ENCODE measurements at regions of chr17 and their contacts with region 1.

Region 1: DNA sequence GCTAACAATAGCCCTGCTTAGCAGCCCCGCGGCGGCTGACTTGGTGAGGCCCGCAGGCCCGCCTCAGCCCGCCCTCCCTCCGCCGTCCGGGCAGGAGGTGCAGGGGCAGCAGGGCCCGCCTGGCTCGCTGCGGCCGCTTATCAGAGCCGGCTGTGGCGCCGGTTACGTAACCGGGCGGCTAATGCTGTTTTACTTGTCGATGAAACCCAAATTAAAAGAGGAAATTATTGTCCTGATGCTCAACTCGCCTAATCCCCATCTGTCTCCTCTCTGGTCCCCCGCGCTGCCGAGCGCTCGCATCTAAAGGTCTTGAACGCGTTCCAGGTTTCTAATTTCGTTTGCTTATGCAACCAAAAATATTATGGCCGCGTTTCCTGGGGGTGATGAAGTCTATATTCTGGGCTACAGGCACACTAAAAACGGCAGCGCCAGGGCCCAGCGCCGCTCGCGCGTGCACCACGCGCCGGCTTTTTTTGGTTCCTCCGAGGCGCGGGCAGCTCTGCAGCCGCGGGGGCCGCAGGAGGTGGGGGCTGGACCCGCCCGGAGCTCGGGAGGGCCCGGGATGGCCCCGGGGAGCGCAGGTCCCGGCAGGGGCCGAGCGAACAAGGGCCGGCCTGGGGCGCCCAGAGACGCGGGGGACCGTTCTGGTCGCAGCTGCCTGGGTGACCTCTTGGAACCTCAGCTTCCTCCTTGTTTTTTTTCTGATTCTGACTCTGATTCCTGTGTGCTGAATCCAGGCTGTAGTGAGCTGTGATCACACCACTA is 65.2 kb upstream of the TOB1 start:
- DNase-seq: peak; percentile 69 to 78 (median 72)
- ATAC-seq: peak; percentile 79
- H3K4me3 ChIP-seq: peak overlapping the region; percentile 28
- H3K27ac ChIP-seq: peak overlapping the region; percentile 48; the same call in 1 of the 3 replicates
- H3K4me1 ChIP-seq: peaks cover 40 to 48% of the 10 kb centered on the region in 2 experiments
- H3K27me3 ChIP-seq: no peaks in the 10 kb centered on the region
- CTCF ChIP-seq: no peak
- EP300 ChIP-seq: no peak
- POLR2A ChIP-seq: no peak
- RAD21 ChIP-seq: no peak

Region 2: DNA sequence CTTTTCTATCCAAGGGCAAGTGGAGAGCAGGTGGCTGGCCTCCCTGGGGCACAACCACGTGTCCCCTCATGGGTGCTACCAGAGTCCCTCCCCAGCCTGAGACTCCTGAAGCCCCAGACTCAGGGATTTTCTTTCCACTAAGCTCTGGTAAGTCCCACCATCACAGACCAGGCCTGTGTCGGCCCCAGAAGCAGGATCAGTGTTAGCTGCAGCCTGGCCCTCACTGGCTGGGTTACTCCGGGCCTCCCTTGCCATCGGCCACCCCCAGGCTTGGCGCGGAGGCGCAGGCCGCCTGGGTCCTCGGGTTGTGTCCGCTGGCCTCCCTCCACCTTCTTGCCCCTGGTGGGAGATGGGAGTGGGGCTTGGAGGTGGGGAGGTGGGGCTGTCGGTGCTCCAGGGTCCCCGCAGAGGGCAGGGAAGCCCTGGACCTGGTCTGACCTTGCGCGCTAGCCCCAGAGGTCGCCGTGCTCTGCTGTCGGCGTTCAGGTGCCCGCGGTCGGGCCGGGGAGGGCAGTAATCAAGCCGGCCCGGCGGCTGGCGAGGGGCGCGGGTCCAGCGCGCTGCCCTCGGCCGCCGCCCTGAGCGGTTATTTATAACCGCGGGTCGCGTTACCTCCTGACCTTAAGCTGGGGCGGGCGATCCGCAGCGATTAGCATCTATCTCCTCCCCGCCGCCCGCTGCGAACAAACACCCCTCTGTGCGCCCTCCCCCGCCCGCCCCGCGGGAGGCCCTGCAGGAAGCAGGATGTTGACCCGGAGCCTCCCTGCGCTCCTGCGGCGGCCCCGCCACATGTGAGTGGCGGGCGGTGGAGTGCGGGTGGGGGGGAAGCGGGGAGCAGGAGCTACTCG is 13.0 kb after region 1 on chr17:
- CTCF ChIA-PET with region 1: no interaction called
- POLR2A ChIA-PET with region 1: interaction called, 23 read pairs
- in situ Hi-C with region 1: no loop called
- intact Hi-C with region 1: no loop called
- DNase-seq: peak; percentile 95 to 97 (median 96)
- ATAC-seq: peak; percentile 94
- H3K4me3 ChIP-seq: peak overlapping the region; percentile 44
- H3K27ac ChIP-seq: peak overlapping the region; percentile 93
- H3K4me1 ChIP-seq: peaks cover 67 to 85% of the 10 kb centered on the region in 2 experiments
- H3K27me3 ChIP-seq: no peaks in the 10 kb centered on the region
- CTCF ChIP-seq: no peak
- EP300 ChIP-seq: peak; percentile 76
- POLR2A ChIP-seq: peak; percentile 80
- RAD21 ChIP-seq: peak in 1 of 2 experiments; percentile 27; a peak in 1 of 4 replicates

Measured in K562 (cell line).